Aorta (tissue), 5 donors: ENCODE measurements at regions of chr18 and their contacts with region 1.

Region 1: GRCh38 chr18:74196220-74197119 is 48.1 kb downstream of the TIMM21 start:
- DNase-seq: no peak
- ATAC-seq: peak; percentile 85
- H3K4me3 ChIP-seq: no peak overlapping the region
- H3K27ac ChIP-seq: no peak overlapping the region
- H3K4me1 ChIP-seq: no peaks in the 10 kb centered on the region
- H3K27me3 ChIP-seq: no peaks in the 10 kb centered on the region

Region 2: GRCh38 chr18:73923866-73924265 is 272.6 kb before region 1 on chr18:
- intact Hi-C with region 1: no loop called
- DNase-seq: no peak
- ATAC-seq: no peak
- H3K4me3 ChIP-seq: no peak overlapping the region
- H3K27ac ChIP-seq: no peak overlapping the region
- H3K4me1 ChIP-seq: no peaks in the 10 kb centered on the region
- H3K27me3 ChIP-seq: no peaks in the 10 kb centered on the region

Region 3: GRCh38 chr18:74342416-74343043 is 146.1 kb after region 1 on chr18:
- intact Hi-C with region 1: loop called (anchors 1 to 2 kb)
- DNase-seq: no peak
- ATAC-seq: no peak
- H3K4me3 ChIP-seq: no peak overlapping the region
- H3K27ac ChIP-seq: no peak overlapping the region
- H3K4me1 ChIP-seq: no peaks in the 10 kb centered on the region
- H3K27me3 ChIP-seq: no peaks in the 10 kb centered on the region

Region 4: GRCh38 chr18:74551936-74552555 is 355.6 kb after region 1 on chr18:
- intact Hi-C with region 1: loop called (anchors 2 kb)
- DNase-seq: peak; percentile 85 to 88
- ATAC-seq: peak; percentile 92
- H3K4me3 ChIP-seq: no peak overlapping the region
- H3K27ac ChIP-seq: no peak overlapping the region
- H3K4me1 ChIP-seq: no peaks in the 10 kb centered on the region
- H3K27me3 ChIP-seq: no peaks in the 10 kb centered on the region